ENCODE measurements at regions of chr4 and their contacts with region 1.

Region 1: DNA sequence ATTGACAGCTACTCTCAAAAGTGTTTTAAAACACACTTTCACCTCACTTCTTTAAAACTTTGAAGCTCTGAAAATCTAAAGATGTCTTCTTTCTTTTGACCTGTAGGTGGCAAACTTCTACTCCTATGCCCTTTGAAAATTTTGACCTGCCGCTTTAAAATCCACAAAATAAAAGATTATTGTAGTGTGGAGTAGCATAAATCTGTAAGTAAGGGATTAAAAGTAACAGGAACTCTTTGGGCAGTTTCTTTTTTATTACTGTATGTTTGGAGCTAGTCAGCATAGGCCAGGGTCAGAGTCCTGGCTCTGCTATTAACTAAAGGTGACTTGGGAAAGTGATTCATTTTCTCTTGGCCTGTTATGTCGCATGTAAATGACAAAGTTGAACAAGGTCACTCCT is 25.5 kb downstream of the BBS12 start:
- DNase-seq: no peak
- ATAC-seq: peak; percentile 28

Region 2: DNA sequence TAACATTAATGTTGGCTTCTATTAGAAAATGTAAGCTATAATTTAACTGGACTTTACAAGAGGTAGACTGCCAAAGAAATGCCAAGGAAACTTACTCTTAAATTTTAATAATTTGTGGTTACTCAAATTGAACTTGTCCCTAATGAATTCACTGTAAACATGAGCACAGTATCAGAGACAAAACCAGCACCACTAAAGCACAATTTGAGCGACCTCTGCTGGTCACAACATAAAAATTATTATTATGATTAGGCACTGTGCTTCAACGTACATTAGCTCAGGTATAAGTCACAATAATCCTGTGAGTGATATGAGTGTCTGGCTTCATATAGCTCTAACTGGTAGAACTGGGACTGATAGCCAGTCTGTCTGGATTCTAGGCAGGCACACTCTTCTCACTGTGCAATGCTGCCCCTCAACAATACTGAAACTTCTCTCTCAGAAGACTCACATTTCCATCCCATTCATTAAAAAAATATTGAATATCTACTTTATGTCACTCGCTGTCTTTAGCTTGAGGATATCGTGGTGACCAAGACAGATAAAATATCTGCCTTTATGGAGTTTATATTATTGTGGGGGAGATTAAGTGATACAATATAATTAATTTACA is 156.4 kb after region 1 on chr4:
- intact Hi-C with region 1: loop called (anchors 5 kb)
- DNase-seq: no peak
- ATAC-seq: peak; percentile 65

Region 3: GRCh38 chr4:122930862-122931261 is 172.8 kb after region 1 on chr4:
- intact Hi-C with region 1: loop called (anchors 5 kb)
- DNase-seq: no peak
- ATAC-seq: no peak

Region 4: DNA sequence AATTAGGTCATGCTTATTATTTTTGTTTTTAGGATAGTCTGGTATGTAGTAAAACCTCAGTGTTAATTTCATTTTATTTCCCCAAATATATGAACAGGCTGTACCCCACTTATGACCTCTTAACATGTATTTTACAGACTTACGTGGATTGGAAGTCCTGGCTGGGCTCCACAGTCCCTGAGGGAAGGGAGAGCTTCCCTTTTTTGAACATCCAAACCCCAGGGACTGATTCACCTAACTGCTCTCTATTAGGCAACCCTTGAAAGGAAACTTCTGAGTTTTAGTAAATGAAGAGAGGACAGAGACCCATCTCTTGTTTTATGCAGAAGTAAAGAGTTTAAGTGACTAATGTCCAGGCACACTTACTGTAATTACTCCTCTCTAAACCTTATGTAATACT is 405.5 kb after region 1 on chr4:
- intact Hi-C with region 1: no loop called
- DNase-seq: no peak
- ATAC-seq: no peak